ENCODE measurements at regions of chr2 and their contacts with region 1.

Region 1: GRCh38 chr2:28751252-28751955 is at the start of gene PPP1CB:
- DNase-seq: peak; percentile 99
- ATAC-seq: peak; percentile 86
- H3K4me3 ChIP-seq: peak within 1 kb of the TSS; percentile 86 to 99 (median 94)
- H3K4me3 Mint-ChIP-seq: peak within 1 kb of the TSS; percentile 95
- H3K27ac ChIP-seq: peak within 1 kb of the TSS; percentile 95 to 98
- H3K27ac Mint-ChIP-seq: peak within 1 kb of the TSS; percentile 96
- H3K4me1 ChIP-seq: peaks cover 29 to 33% of the 10 kb centered on the region in 2 donors
- H3K4me1 Mint-ChIP-seq: peaks cover 53% of the 10 kb centered on the region
- H3K27me3 ChIP-seq: no peaks in the 10 kb centered on the region
- H3K27me3 Mint-ChIP-seq: no peaks in the 10 kb centered on the region
- CTCF ChIP-seq: no peak
- total RNA-seq, gene PPP1CB: 152 and 161 TPM in 2 replicates

Region 2: GRCh38 chr2:27771548-27772335 is 979.7 kb before region 1 on chr2 and contains the start of gene MRPL33:
- CTCF ChIA-PET with region 1: no interaction called
- POLR2A ChIA-PET with region 1: no interaction called
- intact Hi-C with region 1: loop called (anchors 5 kb)
- DNase-seq: peak; percentile 93
- ATAC-seq: peak; percentile 94
- H3K4me3 ChIP-seq: peak within 1 kb of the TSS; percentile 62 to 91 (median 85)
- H3K4me3 Mint-ChIP-seq: peak within 1 kb of the TSS; percentile 100
- H3K27ac ChIP-seq: peak within 1 kb of the TSS; percentile 75 to 93
- H3K27ac Mint-ChIP-seq: peak within 1 kb of the TSS; percentile 99
- H3K4me1 ChIP-seq: peaks cover 11 to 22% of the 10 kb centered on the region in 2 donors
- H3K4me1 Mint-ChIP-seq: peaks cover 34% of the 10 kb centered on the region
- H3K27me3 ChIP-seq: peaks cover 0 to 16% (median 2%) of the 10 kb centered on the region in 4 experiments
- H3K27me3 Mint-ChIP-seq: peaks cover 13% of the 10 kb centered on the region
- CTCF ChIP-seq: no peak
- total RNA-seq, gene MRPL33: 26.5 and 26.9 TPM in 2 replicates

Region 3: GRCh38 chr2:28392297-28393113 is 358.9 kb before region 1 on chr2 and contains the start of gene FOSL2:
- CTCF ChIA-PET with region 1: no interaction called
- POLR2A ChIA-PET with region 1: no interaction called
- intact Hi-C with region 1: loop called (anchors 2 kb)
- DNase-seq: peak; percentile 84
- ATAC-seq: peak; percentile 78
- H3K4me3 ChIP-seq: peak within 1 kb of the TSS; percentile 42 to 90 (median 61)
- H3K4me3 Mint-ChIP-seq: peak within 1 kb of the TSS; percentile 89
- H3K27ac ChIP-seq: peak within 1 kb of the TSS; percentile 6 to 52
- H3K27ac Mint-ChIP-seq: peak within 1 kb of the TSS; percentile 87
- H3K4me1 ChIP-seq: peaks cover 18% of the 10 kb centered on the region in 2 donors
- H3K4me1 Mint-ChIP-seq: peaks cover 25% of the 10 kb centered on the region
- H3K27me3 ChIP-seq: peaks cover 0 to 31% (median 4%) of the 10 kb centered on the region in 4 experiments
- H3K27me3 Mint-ChIP-seq: peaks cover 17% of the 10 kb centered on the region
- CTCF ChIP-seq: no peak
- total RNA-seq, gene FOSL2: 37.7 and 42.2 TPM in 2 replicates

Region 4: GRCh38 chr2:28594289-28595108 is 156.9 kb before region 1 on chr2:
- CTCF ChIA-PET with region 1: interaction called, 112 read pairs
- POLR2A ChIA-PET with region 1: interaction called, 5 read pairs
- intact Hi-C with region 1: loop called (anchors 1 kb)
- DNase-seq: peak; percentile 86
- ATAC-seq: peak; percentile 84
- H3K4me3 ChIP-seq: peak overlapping the region in 3 of 5 experiments; percentile 25 to 35 (median 28)
- H3K4me3 Mint-ChIP-seq: peak overlapping the region; percentile 58
- H3K27ac ChIP-seq: no peak overlapping the region
- H3K27ac Mint-ChIP-seq: no peak overlapping the region
- H3K4me1 ChIP-seq: peaks cover 3 to 9% of the 10 kb centered on the region in 2 donors
- H3K4me1 Mint-ChIP-seq: peaks cover 10% of the 10 kb centered on the region
- H3K27me3 ChIP-seq: no peaks in the 10 kb centered on the region
- H3K27me3 Mint-ChIP-seq: peaks cover 7% of the 10 kb centered on the region
- CTCF ChIP-seq: peak; percentile 84

Region 5: GRCh38 chr2:28709101-28709500 is 42.3 kb before region 1 on chr2:
- CTCF ChIA-PET with region 1: no interaction called
- POLR2A ChIA-PET with region 1: no interaction called
- intact Hi-C with region 1: no loop called
- DNase-seq: no peak
- ATAC-seq: no peak
- H3K4me3 ChIP-seq: no peak overlapping the region
- H3K4me3 Mint-ChIP-seq: no peak overlapping the region
- H3K27ac ChIP-seq: no peak overlapping the region
- H3K27ac Mint-ChIP-seq: no peak overlapping the region
- H3K4me1 ChIP-seq: no peaks in the 10 kb centered on the region
- H3K4me1 Mint-ChIP-seq: no peaks in the 10 kb centered on the region
- H3K27me3 ChIP-seq: no peaks in the 10 kb centered on the region
- H3K27me3 Mint-ChIP-seq: no peaks in the 10 kb centered on the region
- CTCF ChIP-seq: no peak

Region 6: GRCh38 chr2:28810384-28811285 is 59.2 kb after region 1 on chr2 and contains the start of gene SPDYA:
- CTCF ChIA-PET with region 1: no interaction called
- POLR2A ChIA-PET with region 1: interaction called, 3 read pairs
- intact Hi-C with region 1: loop called (anchors 5 kb)
- DNase-seq: peak; percentile 81
- ATAC-seq: peak; percentile 95
- H3K4me3 ChIP-seq: peak within 1 kb of the TSS in 4 of 5 experiments; percentile 43 to 75 (median 56)
- H3K4me3 Mint-ChIP-seq: peak within 1 kb of the TSS; percentile 86
- H3K27ac ChIP-seq: no peak within 1 kb of the TSS
- H3K27ac Mint-ChIP-seq: peak within 1 kb of the TSS; percentile 65
- H3K4me1 ChIP-seq: peaks cover 12 to 16% of the 10 kb centered on the region in 2 donors
- H3K4me1 Mint-ChIP-seq: peaks cover 14% of the 10 kb centered on the region
- H3K27me3 ChIP-seq: peaks cover 0 to 7% (median 0%) of the 10 kb centered on the region in 4 experiments
- H3K27me3 Mint-ChIP-seq: no peaks in the 10 kb centered on the region
- CTCF ChIP-seq: no peak
- total RNA-seq, gene SPDYA: 2.8 and 3.5 TPM in 2 replicates

Region 7: DNA sequence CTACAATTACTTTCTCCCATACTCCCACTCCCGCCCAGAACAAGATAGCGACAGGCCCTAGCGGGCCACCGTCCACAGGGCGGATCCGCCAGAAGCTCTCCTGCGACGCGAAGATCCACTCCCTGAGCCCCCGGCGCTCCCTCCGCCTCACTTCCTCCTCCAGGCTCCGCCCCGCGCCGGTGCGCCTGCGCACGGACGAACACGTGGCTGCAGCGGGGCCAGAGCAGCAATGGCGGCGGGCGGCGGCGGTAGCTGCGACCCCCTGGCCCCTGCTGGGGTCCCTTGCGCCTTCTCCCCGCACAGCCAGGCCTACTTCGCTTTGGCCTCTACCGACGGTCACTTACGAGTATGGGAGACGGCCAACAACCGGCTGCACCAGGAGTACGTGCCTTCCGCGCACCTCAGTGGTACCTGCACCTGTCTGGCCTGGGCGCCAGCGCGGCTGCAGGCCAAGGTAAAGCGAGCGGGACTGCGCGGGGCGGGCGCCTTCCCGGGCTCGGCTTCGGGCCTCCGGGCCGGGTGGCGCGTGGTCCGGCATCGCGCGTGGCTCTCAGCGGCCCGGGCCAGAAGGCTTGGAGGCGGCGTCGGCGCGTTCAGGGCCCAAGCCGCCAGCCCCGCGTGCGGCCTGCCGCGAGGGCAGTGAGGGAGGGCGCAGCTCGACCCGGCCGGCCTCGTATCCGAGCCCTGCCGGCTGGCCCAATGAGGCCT is 143.2 kb after region 1 on chr2 and contains the start of gene WDR43:
- CTCF ChIA-PET with region 1: interaction called, 4 read pairs
- POLR2A ChIA-PET with region 1: interaction called, 5 read pairs
- intact Hi-C with region 1: loop called (anchors 1 kb)
- DNase-seq: peak; percentile 98
- ATAC-seq: peak; percentile 97
- H3K4me3 ChIP-seq: peak within 1 kb of the TSS; percentile 64 to 89 (median 84)
- H3K4me3 Mint-ChIP-seq: peak within 1 kb of the TSS; percentile 92
- H3K27ac ChIP-seq: peak within 1 kb of the TSS; percentile 71 to 81
- H3K27ac Mint-ChIP-seq: peak within 1 kb of the TSS; percentile 94
- H3K4me1 ChIP-seq: peaks cover 26 to 30% of the 10 kb centered on the region in 2 donors
- H3K4me1 Mint-ChIP-seq: peaks cover 43% of the 10 kb centered on the region
- H3K27me3 ChIP-seq: no peaks in the 10 kb centered on the region
- H3K27me3 Mint-ChIP-seq: no peaks in the 10 kb centered on the region
- CTCF ChIP-seq: no peak
- total RNA-seq, gene WDR43: 48.6 and 51.0 TPM in 2 replicates